A549 (cell line): ENCODE measurements at regions of chr7 and their contacts with region 1.

Region 1: GRCh38 chr7:51141451-51142003 is 175.1 kb downstream of the COBL start:
- DNase-seq: peak; percentile 13 to 41
- ATAC-seq: peak; percentile 62 to 72; a peak in 5 of 6 replicates
- H3K4me3 ChIP-seq: no peak overlapping the region
- H3K27ac ChIP-seq: no peak overlapping the region
- H3K4me1 ChIP-seq: peaks cover 8% of the 10 kb centered on the region
- CTCF ChIP-seq: peak; percentile 77
- EP300 ChIP-seq: no peak
- POLR2A ChIP-seq: no peak
- RAD21 ChIP-seq: peak; percentile 92 to 93

Region 2: GRCh38 chr7:50672045-50672444 is 469.5 kb before region 1 on chr7:
- CTCF ChIA-PET with region 1: interaction called, 10 read pairs
- POLR2A ChIA-PET with region 1: no interaction called
- DNase-seq: no peak
- ATAC-seq: no peak
- H3K4me3 ChIP-seq: no peak overlapping the region
- H3K27ac ChIP-seq: no peak overlapping the region
- H3K4me1 ChIP-seq: no peaks in the 10 kb centered on the region
- CTCF ChIP-seq: no peak
- EP300 ChIP-seq: no peak
- POLR2A ChIP-seq: no peak
- RAD21 ChIP-seq: no peak

Region 3: GRCh38 chr7:50709151-50709550 is 432.4 kb before region 1 on chr7:
- CTCF ChIA-PET with region 1: interaction called, 15 read pairs
- POLR2A ChIA-PET with region 1: no interaction called
- DNase-seq: no peak
- ATAC-seq: peak in 1 of 2 experiments; percentile 26; a peak in 2 of 6 replicates
- H3K4me3 ChIP-seq: no peak overlapping the region
- H3K27ac ChIP-seq: peak overlapping the region in 1 of 2 experiments; percentile 38; a peak in 1 of 6 replicates
- H3K4me1 ChIP-seq: peaks cover 69% of the 10 kb centered on the region
- CTCF ChIP-seq: no peak
- EP300 ChIP-seq: no peak
- POLR2A ChIP-seq: no peak
- RAD21 ChIP-seq: no peak

Region 4: DNA sequence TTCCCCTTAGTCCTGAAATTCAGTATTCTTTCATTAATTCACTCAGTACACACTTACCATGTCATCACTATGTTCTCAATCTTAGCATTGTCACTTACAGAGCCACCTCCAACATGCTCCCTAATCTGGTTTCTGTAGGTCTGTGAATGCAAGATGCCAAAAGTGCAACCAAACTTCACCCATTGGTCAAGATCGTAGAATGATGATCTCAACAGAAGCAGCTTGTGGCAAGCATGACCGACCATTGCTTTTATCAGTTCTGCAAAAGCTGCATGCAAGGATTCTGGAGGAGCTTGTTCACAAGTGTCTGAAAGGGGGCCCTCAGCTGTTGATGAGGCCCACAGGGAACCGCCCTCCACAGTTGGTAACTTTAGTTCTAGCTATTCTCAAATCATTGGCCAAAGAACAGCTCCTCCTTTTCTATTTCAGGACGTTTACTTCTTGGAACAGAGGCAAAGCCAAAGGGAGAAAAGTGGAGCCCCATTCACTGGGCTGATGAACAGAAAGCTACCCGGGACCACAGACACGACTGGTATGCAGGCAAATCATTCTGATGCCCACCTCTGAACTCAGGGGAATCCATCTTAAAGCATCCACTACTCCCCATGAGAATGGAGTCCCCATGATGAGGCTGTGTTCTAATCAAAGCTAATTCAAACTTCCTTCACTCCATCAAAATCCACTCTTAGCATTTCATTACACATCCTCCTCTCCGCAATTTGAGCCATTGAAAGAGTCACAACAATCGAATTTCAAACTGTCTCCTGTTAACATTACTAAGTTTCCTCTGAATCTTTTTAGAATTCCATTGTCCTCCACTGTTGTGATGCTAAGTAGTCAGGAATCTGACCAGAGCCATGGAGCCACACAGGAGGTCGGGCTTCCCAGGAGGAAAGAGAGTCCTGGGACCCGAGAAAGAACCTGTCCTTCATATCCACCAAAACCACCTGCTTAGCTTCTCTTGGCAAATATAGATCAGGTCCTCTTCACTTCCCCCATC is 372.7 kb before region 1 on chr7:
- CTCF ChIA-PET with region 1: interaction called, 17 read pairs
- POLR2A ChIA-PET with region 1: no interaction called
- DNase-seq: no peak
- ATAC-seq: no peak
- H3K4me3 ChIP-seq: no peak overlapping the region
- H3K27ac ChIP-seq: no peak overlapping the region
- H3K4me1 ChIP-seq: peaks cover 23% of the 10 kb centered on the region
- CTCF ChIP-seq: no peak
- EP300 ChIP-seq: no peak
- POLR2A ChIP-seq: no peak
- RAD21 ChIP-seq: no peak

Region 5: GRCh38 chr7:50838675-50839377 is 302.7 kb before region 1 on chr7:
- CTCF ChIA-PET with region 1: interaction called, 14 read pairs
- POLR2A ChIA-PET with region 1: no interaction called
- DNase-seq: peak in 1 of 2 experiments; percentile 79
- ATAC-seq: peak; percentile 73 to 81
- H3K4me3 ChIP-seq: no peak overlapping the region
- H3K27ac ChIP-seq: peak overlapping the region; percentile 73 to 85
- H3K4me1 ChIP-seq: peaks cover 46% of the 10 kb centered on the region
- CTCF ChIP-seq: no peak
- EP300 ChIP-seq: peak; percentile 26 to 45; a peak in 2 of 5 replicates
- POLR2A ChIP-seq: no peak
- RAD21 ChIP-seq: peak in 1 of 2 experiments; percentile 25; a peak in 1 of 5 replicates

Region 6: DNA sequence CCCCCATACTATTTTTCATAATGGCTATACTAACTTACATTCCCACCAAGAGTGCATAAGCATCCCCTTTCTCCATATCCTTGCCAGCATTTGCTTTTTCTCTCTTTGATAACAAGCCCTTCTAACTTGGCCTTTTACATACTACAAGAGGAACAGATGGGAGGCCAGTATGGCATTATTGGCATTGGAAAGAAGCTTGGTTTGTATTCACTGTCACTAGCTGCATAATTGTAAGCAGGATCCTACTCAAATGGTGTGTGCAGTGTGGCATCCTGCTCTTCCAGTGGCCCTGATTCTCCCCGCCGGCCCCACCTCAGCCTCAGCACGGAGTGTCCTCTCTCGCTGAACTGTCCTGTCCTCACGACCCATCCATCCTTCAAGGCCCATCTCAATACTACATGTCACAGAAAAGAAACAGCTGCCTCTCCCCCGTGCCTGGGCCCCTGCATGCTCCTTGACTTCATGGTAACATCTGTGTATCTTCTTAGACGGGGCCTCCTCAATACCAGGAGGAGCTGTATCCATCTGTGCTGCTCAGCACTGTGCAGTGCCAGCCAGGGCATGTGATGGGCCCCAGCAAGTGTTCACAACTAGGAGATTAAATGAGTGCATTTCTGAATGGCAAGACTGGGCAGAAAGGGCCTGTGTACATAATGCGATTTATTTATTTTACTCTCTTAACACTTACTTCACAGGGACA is 30.1 kb before region 1 on chr7:
- CTCF ChIA-PET with region 1: no interaction called
- POLR2A ChIA-PET with region 1: no interaction called
- DNase-seq: no peak
- ATAC-seq: no peak
- H3K4me3 ChIP-seq: no peak overlapping the region
- H3K27ac ChIP-seq: no peak overlapping the region
- H3K4me1 ChIP-seq: no peaks in the 10 kb centered on the region
- CTCF ChIP-seq: no peak
- EP300 ChIP-seq: no peak
- POLR2A ChIP-seq: no peak
- RAD21 ChIP-seq: no peak